Sigmoid colon (tissue), 7 donors: ENCODE measurements at regions of chr19 and their contacts with region 1.

Region 1: DNA sequence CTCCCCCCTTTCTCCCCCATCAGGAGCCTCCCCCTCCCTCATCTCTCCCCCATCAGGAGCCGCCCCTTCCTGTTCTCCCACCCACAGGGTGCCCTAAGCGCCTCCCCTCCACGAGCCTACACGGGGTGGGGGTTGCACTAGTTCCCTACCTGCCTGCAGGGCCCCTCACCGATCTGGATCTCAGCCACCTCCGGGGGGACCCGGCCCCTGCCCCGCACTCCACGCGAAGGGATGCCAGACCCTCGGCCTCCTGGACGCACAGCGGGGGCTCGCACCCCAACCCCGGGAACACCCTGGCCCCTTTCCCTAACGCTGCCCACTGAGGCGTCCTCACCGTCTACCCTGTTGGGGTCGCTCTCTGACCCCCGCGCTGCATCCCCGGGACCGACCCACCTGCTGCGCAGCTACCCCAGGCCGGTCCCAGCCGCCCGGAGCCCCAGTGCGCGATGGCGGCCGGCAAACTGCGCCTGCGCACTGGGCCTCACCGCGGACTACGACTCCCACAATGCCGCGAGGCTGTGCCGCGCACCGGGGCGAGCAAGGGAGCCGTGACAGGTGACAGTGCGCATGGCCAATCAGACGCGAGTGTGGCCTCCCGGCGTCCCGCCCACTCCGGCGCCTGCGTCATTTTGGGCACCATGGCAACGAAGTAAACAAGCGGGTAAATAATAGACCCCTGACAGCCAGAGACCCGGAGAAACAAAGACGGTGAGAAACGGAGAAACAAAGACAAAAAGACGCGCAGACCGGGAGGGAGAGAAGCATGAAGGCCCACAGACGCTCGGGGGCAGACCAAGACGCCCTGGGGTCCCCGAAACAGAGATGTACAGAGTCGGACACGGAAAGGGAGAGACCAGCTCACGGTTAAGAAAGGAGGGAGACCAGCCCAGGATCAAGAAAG is at the start of gene ZSCAN18:
- DNase-seq: peak; percentile 99
- H3K4me3 ChIP-seq: peak within 1 kb of the TSS; percentile 87 to 99 (median 92)
- H3K27ac ChIP-seq: peak within 1 kb of the TSS; percentile 87 to 94 (median 92)
- H3K4me1 ChIP-seq: peaks cover 0 to 17% (median 15%) of the 10 kb centered on the region in 4 donors
- H3K27me3 ChIP-seq: no peaks in the 10 kb centered on the region
- CTCF ChIP-seq: no peak
- EP300 ChIP-seq: peak; percentile 32 to 88 (median 57)
- POLR2A ChIP-seq: peak; percentile 64 to 69
- total RNA-seq, gene ZSCAN18: 64.7 to 85.3 (median 73.8) TPM

Region 2: DNA sequence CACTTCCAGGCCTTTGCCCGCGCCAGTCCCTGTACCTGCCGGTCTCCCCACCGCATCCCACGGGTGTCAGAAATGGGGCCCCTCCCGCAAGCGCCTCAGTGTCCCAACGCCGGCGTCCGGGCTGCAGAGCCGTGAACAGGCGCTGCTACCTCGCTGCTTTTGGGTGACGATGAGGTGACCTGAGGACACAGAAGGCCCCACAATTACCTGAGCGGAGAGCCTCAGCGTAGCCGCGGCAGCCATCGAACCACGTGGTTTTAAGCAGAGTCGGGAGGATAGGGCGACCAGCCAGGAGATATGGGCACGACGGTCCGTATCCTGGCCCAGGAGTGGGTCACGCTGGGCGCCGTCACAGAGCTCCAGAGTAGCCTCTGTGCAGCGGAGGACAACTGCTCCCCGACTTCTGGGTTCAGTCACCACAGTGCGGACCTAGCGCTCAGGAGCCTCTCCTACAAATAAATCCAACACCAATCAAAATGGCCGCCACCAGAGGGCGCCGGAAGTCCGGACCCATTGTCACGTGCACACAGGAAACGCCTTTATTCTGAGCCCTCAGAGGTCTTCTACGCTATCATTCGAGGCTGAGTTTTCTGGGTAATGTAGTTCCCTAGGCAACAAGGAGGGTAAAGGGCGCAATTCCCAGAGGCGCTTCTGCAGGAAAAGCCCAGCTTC is 209.3 kb before region 1 on chr19 and contains the start of gene ZNF814:
- intact Hi-C with region 1: no loop called
- DNase-seq: peak; percentile 87
- H3K4me3 ChIP-seq: peak within 1 kb of the TSS; percentile 54 to 67 (median 59)
- H3K27ac ChIP-seq: peak within 1 kb of the TSS; percentile 76 to 84 (median 78)
- H3K4me1 ChIP-seq: peaks cover 0 to 16% (median 11%) of the 10 kb centered on the region in 4 donors
- H3K27me3 ChIP-seq: no peaks in the 10 kb centered on the region
- CTCF ChIP-seq: peak in 2 of 4 experiments; percentile 36 to 49
- EP300 ChIP-seq: no peak
- POLR2A ChIP-seq: no peak
- total RNA-seq, gene ZNF814: 8.2 to 13.3 (median 9.0) TPM

Region 3: DNA sequence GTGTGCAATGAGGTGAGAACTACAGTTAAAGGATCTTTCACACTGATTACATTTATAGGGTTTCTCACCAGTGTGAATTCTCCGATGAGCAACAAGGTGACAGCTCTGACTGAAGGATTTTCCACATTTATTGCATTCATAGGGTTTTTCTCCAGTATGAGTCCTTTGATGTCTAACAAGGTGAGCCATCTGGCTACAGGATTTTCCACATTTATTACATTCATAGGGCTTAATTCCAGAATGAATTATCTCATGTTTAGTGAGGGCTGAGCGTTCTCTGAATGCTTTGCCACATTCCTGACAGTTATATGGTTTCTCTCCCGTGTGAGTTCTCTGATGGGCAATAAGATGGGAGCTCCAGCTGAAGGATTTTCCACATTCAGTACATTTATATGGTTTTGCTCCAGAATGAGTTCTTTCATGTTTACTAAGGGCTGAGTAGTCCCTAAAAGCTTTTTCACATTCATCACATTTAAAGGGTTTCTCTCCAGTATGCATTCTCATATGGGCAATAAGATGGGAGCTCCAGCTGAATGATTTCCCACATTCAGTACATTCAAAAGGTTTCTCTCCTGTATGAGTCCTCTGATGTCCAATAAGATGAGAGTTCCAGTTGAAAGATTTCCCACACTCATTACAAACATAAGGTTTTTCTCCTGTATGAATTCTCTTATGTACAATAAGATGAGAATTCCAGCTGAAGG is 119.3 kb before region 1 on chr19:
- intact Hi-C with region 1: no loop called
- DNase-seq: no peak
- H3K4me3 ChIP-seq: no peak overlapping the region
- H3K27ac ChIP-seq: no peak overlapping the region
- H3K4me1 ChIP-seq: no peaks in the 10 kb centered on the region
- H3K27me3 ChIP-seq: no peaks in the 10 kb centered on the region
- CTCF ChIP-seq: no peak
- EP300 ChIP-seq: no peak
- POLR2A ChIP-seq: no peak

Region 4: DNA sequence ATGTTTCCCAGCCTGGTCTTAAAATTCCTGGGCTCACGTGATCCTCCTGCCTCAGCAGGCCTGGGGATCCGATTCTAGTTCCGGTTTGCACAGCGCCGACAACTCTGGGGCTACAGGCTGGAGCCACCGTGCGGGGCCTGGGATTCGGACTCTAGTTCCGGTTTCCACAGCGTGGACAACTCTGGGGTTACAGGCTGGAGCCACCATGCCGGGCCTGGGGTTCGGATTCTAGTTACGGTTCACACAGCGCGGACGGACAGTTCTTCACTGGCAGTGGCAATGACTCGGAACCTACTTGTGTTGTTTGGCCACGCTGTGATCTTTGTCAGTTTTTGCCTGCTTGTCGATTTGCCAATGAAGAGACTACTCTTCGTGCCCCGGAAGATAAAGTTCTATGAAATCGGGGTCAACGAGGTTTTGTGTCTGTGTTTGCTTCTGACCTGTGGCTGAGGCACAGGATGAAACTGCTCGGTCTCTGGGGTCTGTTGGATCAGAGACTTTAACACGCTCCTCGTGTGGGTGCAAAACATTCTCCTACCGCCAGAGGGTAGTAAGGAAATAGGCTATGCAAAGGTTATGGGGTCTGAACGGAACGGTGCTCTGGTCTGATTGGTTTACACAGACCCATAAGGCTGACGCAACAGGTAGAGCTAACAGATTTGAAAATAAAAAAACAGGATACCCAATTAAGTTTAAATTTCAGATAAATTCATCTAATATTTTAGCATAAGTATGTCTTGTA is 76.3 kb before region 1 on chr19:
- intact Hi-C with region 1: loop called (anchors 2 kb)
- DNase-seq: peak; percentile 73
- H3K4me3 ChIP-seq: no peak overlapping the region
- H3K27ac ChIP-seq: no peak overlapping the region
- H3K4me1 ChIP-seq: no peaks in the 10 kb centered on the region
- H3K27me3 ChIP-seq: no peaks in the 10 kb centered on the region
- CTCF ChIP-seq: peak; percentile 56 to 84 (median 66)
- EP300 ChIP-seq: no peak
- POLR2A ChIP-seq: no peak

Region 5: DNA sequence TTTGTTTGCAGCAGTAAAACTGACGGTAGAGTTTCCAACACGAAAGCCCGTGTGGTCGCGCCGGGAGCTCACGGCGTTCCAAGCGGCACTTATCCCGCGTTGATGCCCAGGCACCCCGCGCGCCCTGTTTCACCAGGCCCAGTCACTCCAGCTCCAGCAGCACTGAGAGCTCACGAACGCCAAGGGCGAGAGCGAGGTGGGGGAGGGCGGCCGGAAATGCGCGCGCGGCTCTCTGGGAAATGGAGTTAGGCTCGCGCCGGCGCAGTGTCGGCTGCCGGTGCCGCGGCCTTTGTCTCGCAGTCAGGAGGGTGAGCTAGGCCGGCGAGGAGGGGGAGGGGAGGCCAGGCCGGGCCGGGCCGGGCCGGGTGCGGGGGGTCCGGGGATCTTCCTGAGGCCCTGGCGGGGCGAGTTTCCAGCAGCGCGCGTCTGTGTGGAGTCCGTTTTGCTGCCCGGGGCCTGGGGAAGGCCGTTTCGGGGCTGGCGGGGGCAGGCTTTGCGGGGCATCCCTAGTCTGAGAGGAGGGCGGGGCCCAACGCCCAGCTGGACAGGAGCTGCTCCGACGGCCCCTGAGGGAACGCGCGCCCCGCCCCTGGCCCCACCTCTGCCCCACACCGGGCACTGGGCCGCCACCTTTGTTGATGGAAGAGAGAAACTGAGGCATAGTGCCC is 38.9 kb before region 1 on chr19 and contains the start of gene ZNF135:
- intact Hi-C with region 1: loop called (anchors 2 kb)
- DNase-seq: peak; percentile 95
- H3K4me3 ChIP-seq: peak within 1 kb of the TSS; percentile 57 to 78 (median 62)
- H3K27ac ChIP-seq: peak within 1 kb of the TSS; percentile 89 to 94 (median 92)
- H3K4me1 ChIP-seq: peaks cover 0 to 12% (median 4%) of the 10 kb centered on the region in 4 donors
- H3K27me3 ChIP-seq: peaks cover 0 to 3% (median 0%) of the 10 kb centered on the region in 3 donors
- CTCF ChIP-seq: no peak
- EP300 ChIP-seq: no peak
- POLR2A ChIP-seq: peak in 1 of 2 donors; percentile 28
- total RNA-seq, gene ZNF135: 6.1 to 10.0 (median 7.4) TPM